ENCODE measurements at regions of chr18 and their contacts with region 1.

Region 1: GRCh38 chr18:11034884-11035283 is 114.5 kb downstream of the PIEZO2 start:
- DNase-seq: no peak

Region 2: GRCh38 chr18:9594823-9595596 is 1439.9 kb before region 1 on chr18:
- intact Hi-C with region 1: loop called in 1 of 2 experiments (anchors 10 kb)
- DNase-seq: no peak

Region 3: DNA sequence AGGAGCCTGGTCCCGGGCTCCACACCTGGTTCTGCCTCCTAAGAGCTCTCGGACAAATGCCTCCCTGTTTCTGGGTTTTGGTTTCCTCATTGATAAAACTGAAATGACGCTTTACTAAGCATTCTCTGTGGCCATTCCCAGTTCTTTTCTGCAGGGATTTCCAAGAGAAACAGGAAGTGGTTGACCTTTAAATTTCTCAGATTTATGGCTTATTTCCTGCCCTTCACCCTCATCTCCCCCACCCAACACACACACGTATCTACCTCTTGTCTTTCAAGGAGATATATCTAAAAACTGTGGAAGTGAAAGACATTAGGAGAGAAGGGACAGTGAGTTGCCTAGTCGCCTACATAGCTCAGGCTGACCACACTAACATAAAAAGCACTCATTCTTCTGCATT is 61.5 kb after region 1 on chr18:
- intact Hi-C with region 1: loop called in 1 of 2 experiments (anchors 2 kb)
- DNase-seq: no peak

Region 4: GRCh38 chr18:11224153-11224552 is 189.3 kb after region 1 on chr18:
- intact Hi-C with region 1: no loop called
- DNase-seq: no peak